CD8-positive, alpha-beta T cell (primary cell): ENCODE measurements at regions of chr1 and their contacts with region 1.

Region 1: GRCh38 chr1:38834937-38835827 is 24.4 kb downstream of the RRAGC start:
- DNase-seq: peak in 7 of 9 experiments; percentile 7 to 85 (median 33)
- ATAC-seq: peak; percentile 75
- H3K4me3 ChIP-seq: no peak overlapping the region
- H3K4me3 Mint-ChIP-seq: no peak overlapping the region
- H3K27ac ChIP-seq: no peak overlapping the region
- H3K27ac Mint-ChIP-seq: no peak overlapping the region
- H3K4me1 ChIP-seq: no peaks in the 10 kb centered on the region
- H3K4me1 Mint-ChIP-seq: peaks cover under 1% of the 10 kb centered on the region
- H3K27me3 ChIP-seq: peaks cover 0 to 5% of the 10 kb centered on the region in 2 experiments
- H3K27me3 Mint-ChIP-seq: peaks cover 5% of the 10 kb centered on the region
- CTCF ChIP-seq: peak; percentile 73

Region 2: GRCh38 chr1:37602750-37603694 is 1232.2 kb before region 1 on chr1:
- CTCF ChIA-PET with region 1: no interaction called
- POLR2A ChIA-PET with region 1: no interaction called
- intact Hi-C with region 1: loop called in 1 of 2 experiments (anchors 2 kb)
- DNase-seq: peak in 7 of 9 experiments; percentile 10 to 64 (median 39)
- ATAC-seq: peak; percentile 75
- H3K4me3 ChIP-seq: no peak overlapping the region
- H3K4me3 Mint-ChIP-seq: no peak overlapping the region
- H3K27ac ChIP-seq: no peak overlapping the region
- H3K27ac Mint-ChIP-seq: no peak overlapping the region
- H3K4me1 ChIP-seq: no peaks in the 10 kb centered on the region
- H3K4me1 Mint-ChIP-seq: no peaks in the 10 kb centered on the region
- H3K27me3 ChIP-seq: peaks cover 0 to 2% of the 10 kb centered on the region in 2 experiments
- H3K27me3 Mint-ChIP-seq: peaks cover 7% of the 10 kb centered on the region
- CTCF ChIP-seq: peak; percentile 80

Region 3: GRCh38 chr1:37890378-37891014 is 944.7 kb before region 1 on chr1:
- CTCF ChIA-PET with region 1: interaction called, 3 read pairs
- POLR2A ChIA-PET with region 1: no interaction called
- intact Hi-C with region 1: loop called (anchors 1 to 2 kb)
- DNase-seq: peak in 3 of 9 experiments; percentile 9 to 67 (median 56)
- ATAC-seq: peak; percentile 76
- H3K4me3 ChIP-seq: no peak overlapping the region
- H3K4me3 Mint-ChIP-seq: no peak overlapping the region
- H3K27ac ChIP-seq: peak overlapping the region in 1 of 2 experiments; percentile 22
- H3K27ac Mint-ChIP-seq: peak overlapping the region; percentile 67
- H3K4me1 ChIP-seq: peaks cover 5% of the 10 kb centered on the region
- H3K4me1 Mint-ChIP-seq: peaks cover 6% of the 10 kb centered on the region
- H3K27me3 ChIP-seq: no peaks in the 10 kb centered on the region
- H3K27me3 Mint-ChIP-seq: no peaks in the 10 kb centered on the region
- CTCF ChIP-seq: peak; percentile 80

Region 4: GRCh38 chr1:38026592-38027200 is 808.5 kb before region 1 on chr1:
- CTCF ChIA-PET with region 1: interaction called, 3 read pairs
- POLR2A ChIA-PET with region 1: no interaction called
- intact Hi-C with region 1: loop called in 1 of 2 experiments (anchors 1 kb)
- DNase-seq: peak in 2 of 9 experiments; percentile 41 to 54
- ATAC-seq: no peak
- H3K4me3 ChIP-seq: no peak overlapping the region
- H3K4me3 Mint-ChIP-seq: no peak overlapping the region
- H3K27ac ChIP-seq: no peak overlapping the region
- H3K27ac Mint-ChIP-seq: no peak overlapping the region
- H3K4me1 ChIP-seq: peaks cover 18% of the 10 kb centered on the region
- H3K4me1 Mint-ChIP-seq: peaks cover 32% of the 10 kb centered on the region
- H3K27me3 ChIP-seq: no peaks in the 10 kb centered on the region
- H3K27me3 Mint-ChIP-seq: no peaks in the 10 kb centered on the region
- CTCF ChIP-seq: no peak

Region 5: DNA sequence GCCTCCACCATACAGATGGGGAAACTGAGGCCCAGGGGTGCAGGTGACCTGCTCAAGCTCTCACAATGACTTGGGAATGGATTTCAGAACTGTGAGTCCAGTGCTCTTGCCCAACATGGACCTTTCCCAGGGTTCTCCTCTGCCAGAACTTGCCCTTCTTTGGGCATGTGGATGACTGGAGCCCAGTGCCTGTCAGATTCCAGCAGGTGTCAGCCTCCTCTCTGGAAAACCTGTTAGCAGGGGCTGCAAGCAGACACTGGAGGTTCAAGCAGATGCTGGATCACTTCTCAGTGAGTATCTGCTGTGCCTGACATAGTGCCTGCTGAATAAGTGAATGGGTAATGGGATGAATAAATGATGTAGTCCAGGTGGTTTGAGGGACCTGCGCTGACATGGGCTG is 474.4 kb before region 1 on chr1:
- CTCF ChIA-PET with region 1: no interaction called
- POLR2A ChIA-PET with region 1: no interaction called
- intact Hi-C with region 1: loop called in 1 of 2 experiments (anchors 5 kb)
- DNase-seq: peak in 2 of 9 experiments; percentile 5 to 7
- ATAC-seq: no peak
- H3K4me3 ChIP-seq: no peak overlapping the region
- H3K4me3 Mint-ChIP-seq: no peak overlapping the region
- H3K27ac ChIP-seq: no peak overlapping the region
- H3K27ac Mint-ChIP-seq: no peak overlapping the region
- H3K4me1 ChIP-seq: no peaks in the 10 kb centered on the region
- H3K4me1 Mint-ChIP-seq: no peaks in the 10 kb centered on the region
- H3K27me3 ChIP-seq: no peaks in the 10 kb centered on the region
- H3K27me3 Mint-ChIP-seq: peaks cover 16% of the 10 kb centered on the region
- CTCF ChIP-seq: no peak

Region 6: DNA sequence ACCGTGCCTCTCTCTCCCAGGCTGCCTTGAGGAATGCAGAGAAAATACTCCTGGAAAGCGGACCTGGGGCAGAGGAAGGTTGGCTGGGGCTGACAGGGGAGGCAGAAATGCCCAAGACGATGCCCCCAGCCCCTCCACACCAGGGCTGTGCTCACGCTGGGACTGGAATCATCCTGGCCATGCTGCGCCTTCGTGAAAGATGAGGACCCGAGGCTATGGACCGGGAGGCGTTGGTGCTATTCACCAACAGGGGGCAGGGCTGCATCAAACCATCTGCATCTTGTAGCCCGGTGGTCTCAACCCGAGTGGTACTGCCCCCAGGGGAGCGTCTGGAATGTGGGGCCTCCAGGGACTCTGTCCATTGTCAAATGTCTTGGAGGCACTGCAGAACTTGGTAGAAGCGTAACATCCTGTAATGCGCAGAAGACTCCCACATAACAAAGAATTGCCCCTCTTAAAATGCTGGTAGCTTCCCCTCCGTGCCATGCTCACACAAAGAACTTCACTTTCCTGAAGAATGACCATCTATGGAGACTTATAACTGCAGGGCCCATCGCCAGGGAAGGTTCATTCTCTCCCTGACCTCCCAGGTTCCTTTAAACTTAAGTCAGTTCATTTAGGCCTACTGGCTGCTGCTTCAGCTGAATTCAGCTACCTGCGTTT is 226.8 kb before region 1 on chr1:
- CTCF ChIA-PET with region 1: no interaction called
- POLR2A ChIA-PET with region 1: no interaction called
- intact Hi-C with region 1: loop called in 1 of 2 experiments (anchors 5 kb)
- DNase-seq: peak in 3 of 9 experiments; percentile 13 to 35 (median 19)
- ATAC-seq: no peak
- H3K4me3 ChIP-seq: no peak overlapping the region
- H3K4me3 Mint-ChIP-seq: no peak overlapping the region
- H3K27ac ChIP-seq: no peak overlapping the region
- H3K27ac Mint-ChIP-seq: no peak overlapping the region
- H3K4me1 ChIP-seq: no peaks in the 10 kb centered on the region
- H3K4me1 Mint-ChIP-seq: no peaks in the 10 kb centered on the region
- H3K27me3 ChIP-seq: no peaks in the 10 kb centered on the region
- H3K27me3 Mint-ChIP-seq: peaks cover 21% of the 10 kb centered on the region
- CTCF ChIP-seq: peak; percentile 29

Region 7: GRCh38 chr1:38818175-38818976 is 16.8 kb before region 1 on chr1:
- CTCF ChIA-PET with region 1: interaction called, 19 read pairs
- POLR2A ChIA-PET with region 1: no interaction called
- intact Hi-C with region 1: no loop called
- DNase-seq: peak; percentile 21 to 69 (median 47)
- ATAC-seq: peak; percentile 64
- H3K4me3 ChIP-seq: peak overlapping the region in 1 of 2 experiments; percentile 35
- H3K4me3 Mint-ChIP-seq: peak overlapping the region; percentile 43
- H3K27ac ChIP-seq: no peak overlapping the region
- H3K27ac Mint-ChIP-seq: no peak overlapping the region
- H3K4me1 ChIP-seq: peaks cover 20% of the 10 kb centered on the region
- H3K4me1 Mint-ChIP-seq: peaks cover 14% of the 10 kb centered on the region
- H3K27me3 ChIP-seq: peaks cover 22% of the 10 kb centered on the region in 2 experiments
- H3K27me3 Mint-ChIP-seq: peaks cover 59% of the 10 kb centered on the region
- CTCF ChIP-seq: peak; percentile 80

Region 8: DNA sequence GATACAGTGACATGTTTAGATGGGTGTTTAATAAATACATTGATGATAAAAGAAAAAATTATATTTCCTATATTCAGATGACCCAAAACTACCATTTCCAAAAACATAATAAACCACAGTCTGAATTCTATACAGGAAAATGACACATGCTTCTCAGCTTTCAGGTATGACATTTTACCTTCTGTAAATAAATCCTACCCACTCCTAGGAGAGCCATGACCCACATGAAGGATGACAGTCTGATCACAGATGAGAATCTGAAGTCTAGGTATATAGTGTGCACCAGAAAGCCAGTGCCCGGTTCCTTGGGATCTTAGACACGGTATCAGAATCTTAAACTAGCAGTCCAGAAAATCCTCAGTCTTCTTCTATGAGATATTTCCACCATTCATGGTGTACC is 49.9 kb after region 1 on chr1:
- CTCF ChIA-PET with region 1: no interaction called
- POLR2A ChIA-PET with region 1: no interaction called
- intact Hi-C with region 1: no loop called
- DNase-seq: no peak
- ATAC-seq: no peak
- H3K4me3 ChIP-seq: no peak overlapping the region
- H3K4me3 Mint-ChIP-seq: no peak overlapping the region
- H3K27ac ChIP-seq: no peak overlapping the region
- H3K27ac Mint-ChIP-seq: no peak overlapping the region
- H3K4me1 ChIP-seq: no peaks in the 10 kb centered on the region
- H3K4me1 Mint-ChIP-seq: no peaks in the 10 kb centered on the region
- H3K27me3 ChIP-seq: no peaks in the 10 kb centered on the region
- H3K27me3 Mint-ChIP-seq: peaks cover 2% of the 10 kb centered on the region
- CTCF ChIP-seq: no peak